HEK293T (cell line): ENCODE measurements at regions of chr12 and their contacts with region 1.

Region 1: GRCh38 chr12:49828133-49829091 is at the start of gene NCKAP5L:
- DNase-seq: peak; percentile 97

Region 2: GRCh38 chr12:49647827-49648711 is 180.3 kb before region 1 on chr12:
- CTCF ChIA-PET with region 1: no interaction called
- POLR2A ChIA-PET with region 1: no interaction called
- DNase-seq: no peak

Region 3: DNA sequence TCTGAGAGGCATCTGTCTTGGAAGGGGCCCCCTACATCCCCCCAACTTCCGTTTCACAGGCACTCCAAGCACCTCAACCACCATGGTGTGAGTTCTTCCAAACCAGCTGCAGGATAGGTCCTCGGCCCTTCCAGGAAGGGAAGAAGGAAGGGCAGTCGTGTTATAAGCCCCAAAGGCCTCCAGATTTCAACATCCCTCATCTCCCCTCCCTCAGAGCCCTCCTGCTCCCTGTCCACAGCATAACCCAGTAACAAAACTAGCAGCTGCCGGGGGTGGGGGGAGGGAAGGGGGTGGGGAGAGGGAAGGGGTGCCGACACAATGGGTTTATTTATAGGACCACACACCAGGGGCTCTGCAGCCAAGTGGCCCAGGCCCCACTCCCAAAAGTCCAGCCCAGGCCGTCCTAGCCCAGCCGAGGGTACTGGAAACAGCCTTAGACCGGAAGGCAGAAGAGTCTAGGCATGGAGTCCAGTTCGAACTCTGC is 18.5 kb before region 1 on chr12:
- CTCF ChIA-PET with region 1: no interaction called
- POLR2A ChIA-PET with region 1: interaction called, 10 read pairs
- DNase-seq: no peak

Region 4: DNA sequence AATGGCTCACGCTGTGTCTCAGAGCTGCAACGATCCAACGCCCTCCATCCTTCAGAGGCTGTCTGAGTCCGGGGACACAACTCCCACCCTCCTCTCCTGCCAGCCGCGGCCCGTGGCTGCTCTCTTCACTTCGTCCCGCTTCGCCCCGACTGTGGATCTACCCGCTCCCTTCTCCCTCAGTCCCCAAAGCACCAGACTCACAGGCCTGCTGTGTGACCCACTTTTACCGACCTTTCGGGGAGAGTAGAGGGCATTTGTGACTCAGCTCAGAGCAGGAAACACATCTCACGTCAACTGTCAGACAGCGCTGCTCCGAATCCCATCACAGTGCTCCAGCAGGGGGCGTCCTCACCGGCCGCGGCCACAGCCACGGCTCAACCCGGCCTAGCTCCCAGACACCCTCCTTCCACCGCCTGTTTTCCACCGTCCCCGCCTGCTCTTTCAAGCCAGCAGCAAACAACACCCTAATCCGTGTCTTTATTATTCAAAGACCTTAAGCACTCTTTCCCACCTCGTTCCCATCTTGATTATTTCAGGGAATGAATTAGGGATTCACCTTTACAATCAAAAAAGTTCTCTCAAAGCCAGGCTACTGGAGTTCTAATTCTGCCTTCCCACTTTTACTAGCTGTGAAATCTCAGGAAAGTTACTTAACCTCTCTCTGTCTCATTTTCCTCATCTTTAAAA is 117.1 kb after region 1 on chr12:
- CTCF ChIA-PET with region 1: no interaction called
- POLR2A ChIA-PET with region 1: no interaction called
- DNase-seq: peak; percentile 92

Region 5: DNA sequence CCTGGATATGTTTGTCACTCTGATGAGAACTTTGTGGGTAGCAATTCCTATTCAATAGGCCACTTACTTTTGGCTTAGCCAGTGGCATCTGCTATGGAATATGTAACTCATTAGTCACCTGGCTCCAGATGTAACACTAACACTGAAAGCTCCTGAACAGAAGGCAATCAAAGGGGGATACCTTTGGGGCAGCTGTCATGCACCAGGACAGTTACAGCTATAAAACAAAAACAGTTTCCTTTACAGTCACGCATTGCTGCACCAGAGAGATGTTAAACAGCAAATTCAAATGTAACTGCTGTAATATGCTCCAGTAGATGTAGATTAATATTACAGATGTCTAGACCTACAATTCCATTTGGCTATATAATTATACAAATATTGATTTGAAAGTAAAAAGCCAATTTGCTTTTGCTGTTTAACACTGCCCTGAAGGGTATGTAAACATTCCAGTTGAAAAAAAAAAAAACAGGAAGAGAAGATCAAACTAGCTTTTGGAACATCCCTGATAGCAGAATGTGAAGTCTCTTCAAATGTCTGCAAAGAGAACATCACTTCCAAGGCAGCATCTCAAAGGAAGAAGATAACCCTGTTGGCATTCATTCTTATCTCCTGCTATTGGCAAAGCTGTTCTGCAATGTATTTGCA is 178.5 kb after region 1 on chr12:
- CTCF ChIA-PET with region 1: no interaction called
- POLR2A ChIA-PET with region 1: no interaction called
- DNase-seq: no peak

Region 6: DNA sequence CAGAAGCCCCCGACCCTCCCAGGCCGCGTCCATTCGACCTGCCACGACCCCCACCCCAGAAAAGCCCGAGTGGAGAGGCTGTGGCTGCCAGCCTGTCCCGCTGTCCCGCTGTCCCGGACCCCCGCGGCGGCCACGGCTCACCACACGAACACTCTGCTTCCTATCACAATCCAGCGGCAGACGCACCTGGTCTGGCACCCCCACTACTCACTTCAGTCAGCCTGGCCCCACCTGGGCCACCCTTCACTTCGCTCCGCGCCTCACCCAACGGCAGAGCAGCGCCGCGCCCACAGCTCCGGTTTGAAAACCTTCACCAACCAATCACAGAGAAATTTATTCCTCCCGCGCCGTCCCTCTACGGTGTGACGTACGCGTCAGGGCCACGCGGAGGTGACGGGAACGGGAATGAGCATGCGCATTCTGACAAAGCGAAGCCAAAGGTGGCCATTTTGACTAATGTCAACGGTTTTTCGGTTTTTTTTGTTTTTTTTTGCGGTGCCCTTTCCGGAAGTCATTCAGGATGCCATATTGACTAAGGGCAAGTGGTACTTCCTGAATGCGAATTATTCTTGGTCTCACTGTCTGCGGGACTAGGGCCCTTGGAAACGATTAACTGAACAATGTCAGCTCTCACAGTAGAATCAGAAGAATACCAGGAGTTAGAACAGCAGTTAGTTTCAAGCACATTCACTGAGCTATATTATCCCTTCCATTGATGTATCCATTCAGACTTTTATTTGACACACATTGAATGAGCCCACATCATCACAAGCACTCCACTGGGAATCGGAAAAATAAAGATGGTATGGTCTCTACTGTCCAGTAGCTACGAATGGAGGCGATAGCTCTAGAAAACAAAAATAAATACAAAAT is 197.0 kb after region 1 on chr12 and contains the start of gene RACGAP1:
- CTCF ChIA-PET with region 1: no interaction called
- POLR2A ChIA-PET with region 1: no interaction called
- DNase-seq: peak; percentile 97